ENCODE measurements at regions of chr3 and their contacts with region 1.

Region 1: DNA sequence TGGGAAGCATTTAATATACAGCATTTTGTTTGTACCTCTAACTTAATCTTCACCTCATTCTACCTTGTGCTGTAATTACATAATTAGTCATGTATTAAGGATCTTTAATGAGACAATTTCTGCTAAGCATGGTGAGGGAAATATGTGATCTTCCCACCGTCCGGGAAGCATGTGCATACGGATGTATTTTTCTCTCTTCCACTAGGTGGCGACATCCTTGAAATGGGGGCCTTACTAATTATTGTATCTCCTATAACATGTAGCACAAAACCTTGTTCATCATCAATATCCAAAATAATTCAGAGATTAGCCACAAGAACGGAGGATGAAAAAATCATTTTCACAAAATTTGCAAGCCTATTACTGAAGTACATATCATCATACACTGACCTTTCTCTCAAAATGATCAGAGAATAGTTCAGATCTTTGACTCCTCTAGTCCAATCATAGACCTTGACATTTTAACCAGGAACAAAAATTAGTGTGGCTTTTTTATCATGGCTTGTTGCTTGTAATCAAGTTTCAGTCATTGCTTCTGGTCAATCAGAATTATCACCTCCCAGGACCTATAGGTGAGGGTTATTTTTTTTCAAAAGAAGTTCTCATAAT is 148.9 kb upstream of the GBE1 start:
- DNase-seq: no peak
- H3K4me3 ChIP-seq: no peak overlapping the region
- H3K27ac ChIP-seq: no peak overlapping the region
- H3K4me1 ChIP-seq: no peaks in the 10 kb centered on the region
- H3K27me3 ChIP-seq: no peaks in the 10 kb centered on the region
- CTCF ChIP-seq: peak; percentile 15 to 61 (median 41)
- EP300 ChIP-seq: no peak
- POLR2A ChIP-seq: no peak
- RAD21 ChIP-seq: peak; percentile 56 to 60

Region 2: DNA sequence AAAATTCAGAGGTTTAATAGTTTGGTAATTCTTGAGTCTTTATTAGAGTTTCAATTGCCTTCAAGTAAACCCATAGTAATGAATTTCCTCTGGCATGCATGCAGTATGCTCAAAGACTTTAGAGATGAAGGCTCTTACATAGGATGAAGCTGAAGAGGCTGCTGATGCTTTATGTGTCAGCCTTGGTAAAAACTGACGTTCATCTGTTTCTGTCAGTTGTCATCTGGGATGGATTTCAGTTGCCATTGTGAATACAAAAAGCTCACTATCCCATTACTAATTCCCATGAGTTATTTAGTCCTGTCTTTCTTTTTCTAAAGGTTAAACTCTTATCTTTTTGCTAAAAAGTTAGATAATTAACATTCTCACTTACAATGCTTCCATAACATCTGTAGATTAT is 12.0 kb before region 1 on chr3:
- CTCF ChIA-PET with region 1: interaction called, 18 read pairs
- POLR2A ChIA-PET with region 1: no interaction called
- DNase-seq: no peak
- H3K4me3 ChIP-seq: no peak overlapping the region
- H3K27ac ChIP-seq: no peak overlapping the region
- H3K4me1 ChIP-seq: peaks cover 0 to 3% (median 0%) of the 10 kb centered on the region in 4 experiments; a peak in 1 of 7 replicates
- H3K27me3 ChIP-seq: no peaks in the 10 kb centered on the region
- CTCF ChIP-seq: no peak
- EP300 ChIP-seq: no peak
- POLR2A ChIP-seq: no peak
- RAD21 ChIP-seq: no peak

Region 3: DNA sequence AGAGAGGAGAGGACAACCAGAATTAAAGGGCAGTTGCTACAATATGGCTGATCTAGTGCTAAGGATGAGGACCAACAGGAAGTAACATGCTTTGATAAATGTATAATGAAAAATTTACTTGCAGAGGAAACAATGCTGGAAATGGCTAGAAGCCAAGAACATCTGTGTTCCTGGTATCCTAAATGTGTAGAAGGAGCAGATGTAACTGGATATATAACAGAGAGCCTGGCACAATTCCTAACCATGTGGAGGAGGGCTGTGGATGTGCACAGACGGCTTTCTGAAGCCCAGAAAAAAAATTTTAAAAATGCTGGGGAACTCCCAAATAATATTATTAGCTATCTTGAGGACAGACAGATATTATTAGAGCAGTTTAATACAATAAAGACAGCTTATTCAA is 10.5 kb after region 1 on chr3:
- CTCF ChIA-PET with region 1: interaction called, 61 read pairs
- POLR2A ChIA-PET with region 1: no interaction called
- DNase-seq: no peak
- H3K4me3 ChIP-seq: no peak overlapping the region
- H3K27ac ChIP-seq: no peak overlapping the region
- H3K4me1 ChIP-seq: no peaks in the 10 kb centered on the region
- H3K27me3 ChIP-seq: no peaks in the 10 kb centered on the region
- CTCF ChIP-seq: no peak
- EP300 ChIP-seq: no peak
- POLR2A ChIP-seq: no peak
- RAD21 ChIP-seq: no peak

Region 4: GRCh38 chr3:81952141-81952540 is 41.8 kb after region 1 on chr3:
- CTCF ChIA-PET with region 1: interaction called, 11 read pairs
- POLR2A ChIA-PET with region 1: no interaction called
- DNase-seq: no peak
- H3K4me3 ChIP-seq: no peak overlapping the region
- H3K27ac ChIP-seq: no peak overlapping the region
- H3K4me1 ChIP-seq: no peaks in the 10 kb centered on the region
- H3K27me3 ChIP-seq: no peaks in the 10 kb centered on the region
- CTCF ChIP-seq: peak in 1 of 3 experiments; percentile 2; a peak in 1 of 4 replicates
- EP300 ChIP-seq: no peak
- POLR2A ChIP-seq: no peak
- RAD21 ChIP-seq: peak; percentile 9 to 22; a peak in 2 of 4 replicates